CD8-positive, alpha-beta T cell (primary cell): ENCODE measurements at regions of chr12 and their contacts with region 1.

Region 1: DNA sequence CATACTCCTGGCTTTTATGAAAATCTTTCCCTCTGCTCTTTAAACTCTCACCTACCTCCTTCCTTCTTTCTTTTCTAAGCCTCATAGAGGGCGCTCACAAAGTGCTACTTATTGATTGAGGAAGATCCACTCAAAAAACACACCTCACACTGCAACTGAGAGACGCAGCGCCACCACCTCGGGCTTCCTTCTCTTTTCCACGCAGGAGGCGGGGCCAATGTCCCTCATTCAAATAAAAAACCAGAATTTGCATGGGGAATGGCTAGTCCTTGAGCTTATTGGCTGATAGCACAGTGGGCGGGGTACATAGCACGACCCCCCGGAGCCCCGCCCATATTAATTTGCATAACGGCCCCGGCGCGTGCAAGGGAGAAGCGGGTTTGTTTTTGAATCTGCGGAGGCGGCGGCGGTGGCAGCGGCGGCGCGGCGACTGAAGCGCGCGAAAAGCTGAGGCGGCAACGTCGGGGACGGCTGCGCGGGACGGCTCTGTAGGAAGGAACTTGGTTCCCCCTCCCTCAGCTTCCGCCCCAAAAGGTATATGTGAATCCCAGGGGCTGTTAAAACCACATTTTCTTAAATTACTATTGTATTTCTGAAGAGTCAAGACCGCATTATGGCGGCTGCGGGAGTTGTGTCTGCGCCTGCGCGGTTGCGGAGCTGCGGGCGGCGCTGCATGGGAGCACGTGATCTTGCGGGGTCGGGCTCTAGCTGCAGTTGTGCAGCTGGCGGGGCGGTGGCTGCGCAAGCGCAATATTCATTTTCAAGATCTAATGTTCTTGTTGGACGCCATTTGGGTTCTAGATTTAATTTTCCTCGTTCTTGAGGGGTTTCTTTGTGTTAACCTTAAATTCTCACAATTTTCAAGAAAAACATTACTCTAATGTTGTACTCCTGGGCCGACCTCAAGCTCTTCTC is at the start of gene ATF7IP:
- DNase-seq: peak; percentile 92 to 99 (median 95)
- ATAC-seq: peak; percentile 89
- H3K4me3 ChIP-seq: peak within 1 kb of the TSS; percentile 63 to 80
- H3K4me3 Mint-ChIP-seq: peak within 1 kb of the TSS; percentile 87
- H3K27ac ChIP-seq: peak within 1 kb of the TSS; percentile 88
- H3K27ac Mint-ChIP-seq: peak within 1 kb of the TSS; percentile 93
- H3K4me1 ChIP-seq: peaks cover 24% of the 10 kb centered on the region
- H3K4me1 Mint-ChIP-seq: peaks cover 46% of the 10 kb centered on the region
- H3K27me3 ChIP-seq: no peaks in the 10 kb centered on the region
- H3K27me3 Mint-ChIP-seq: no peaks in the 10 kb centered on the region
- CTCF ChIP-seq: no peak
- total RNA-seq, gene ATF7IP: 125 to 126 TPM

Region 2: DNA sequence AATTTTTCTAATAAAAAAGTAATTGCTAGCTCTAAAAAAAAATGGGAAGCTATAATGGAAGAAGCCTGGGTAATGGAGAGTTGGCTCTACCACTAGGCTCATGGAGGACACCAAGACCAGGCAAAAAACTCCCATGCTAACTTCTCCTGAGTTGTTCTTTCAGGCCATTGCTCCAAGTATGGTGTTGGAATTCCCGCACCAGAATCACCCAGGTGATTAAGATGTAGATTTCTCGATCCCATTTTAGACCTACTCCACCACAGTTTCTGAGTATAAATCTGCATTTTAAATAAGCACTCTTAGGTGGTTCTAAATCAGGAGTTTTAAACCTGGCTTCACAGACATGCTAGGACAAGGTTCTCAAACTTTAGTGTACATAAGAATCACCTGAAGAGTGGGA is 948.0 kb before region 1 on chr12:
- CTCF ChIA-PET with region 1: no interaction called
- POLR2A ChIA-PET with region 1: no interaction called
- intact Hi-C with region 1: no loop called
- DNase-seq: no peak
- ATAC-seq: no peak
- H3K4me3 ChIP-seq: no peak overlapping the region
- H3K4me3 Mint-ChIP-seq: no peak overlapping the region
- H3K27ac ChIP-seq: no peak overlapping the region
- H3K27ac Mint-ChIP-seq: no peak overlapping the region
- H3K4me1 ChIP-seq: no peaks in the 10 kb centered on the region
- H3K4me1 Mint-ChIP-seq: no peaks in the 10 kb centered on the region
- H3K27me3 ChIP-seq: peaks cover 0 to 2% of the 10 kb centered on the region in 2 experiments
- H3K27me3 Mint-ChIP-seq: peaks cover 5% of the 10 kb centered on the region
- CTCF ChIP-seq: no peak

Region 3: GRCh38 chr12:13887779-13888388 is 477.7 kb before region 1 on chr12:
- CTCF ChIA-PET with region 1: no interaction called
- POLR2A ChIA-PET with region 1: no interaction called
- intact Hi-C with region 1: no loop called
- DNase-seq: no peak
- ATAC-seq: no peak
- H3K4me3 ChIP-seq: no peak overlapping the region
- H3K4me3 Mint-ChIP-seq: no peak overlapping the region
- H3K27ac ChIP-seq: no peak overlapping the region
- H3K27ac Mint-ChIP-seq: no peak overlapping the region
- H3K4me1 ChIP-seq: no peaks in the 10 kb centered on the region
- H3K4me1 Mint-ChIP-seq: no peaks in the 10 kb centered on the region
- H3K27me3 ChIP-seq: peaks cover 0 to 3% of the 10 kb centered on the region in 2 experiments
- H3K27me3 Mint-ChIP-seq: peaks cover 10% of the 10 kb centered on the region
- CTCF ChIP-seq: no peak

Region 4: DNA sequence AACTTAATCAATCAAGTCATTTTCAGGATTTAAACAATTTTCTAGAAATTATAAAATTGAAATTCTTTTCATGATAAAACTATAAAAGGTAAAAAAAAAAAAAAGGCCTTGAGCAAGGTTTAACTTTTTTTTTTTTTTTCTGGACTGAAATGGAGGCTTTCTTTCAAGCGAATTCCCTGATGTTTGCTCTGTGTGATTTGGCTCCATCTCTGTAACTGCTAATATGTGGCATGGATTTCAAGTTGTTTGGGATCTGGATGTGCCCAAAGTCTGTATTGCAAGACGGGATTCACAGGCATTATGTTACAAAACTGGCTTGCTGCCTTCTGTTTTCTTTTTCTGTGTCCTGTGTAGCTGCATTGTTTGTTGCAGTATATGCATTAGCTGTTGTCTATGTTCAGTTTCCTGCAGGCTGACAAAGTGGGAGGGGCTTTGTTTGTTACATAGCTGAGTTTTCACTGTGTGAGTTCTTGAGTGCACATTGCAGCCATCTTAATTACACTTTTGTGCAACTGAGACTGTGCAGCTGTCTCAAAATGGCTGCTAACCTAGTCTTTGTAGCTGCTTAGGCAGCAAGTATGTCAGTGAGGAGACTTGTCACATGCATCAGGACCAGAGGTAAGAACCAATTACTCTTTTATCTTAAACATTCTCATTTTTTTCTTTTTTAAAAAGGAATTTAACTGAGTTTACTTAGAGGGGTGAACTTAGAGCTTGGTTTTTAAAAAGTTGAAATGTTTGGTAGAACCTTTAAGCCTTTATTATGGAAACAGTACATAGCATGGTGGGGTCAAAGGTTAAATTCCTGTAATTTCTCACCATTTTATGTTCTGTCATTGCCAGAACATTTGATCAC is 19.5 kb after region 1 on chr12:
- CTCF ChIA-PET with region 1: interaction called, 27 read pairs
- POLR2A ChIA-PET with region 1: interaction called, 90 read pairs
- intact Hi-C with region 1: loop called (anchors 1 to 2 kb)
- DNase-seq: peak; percentile 23 to 92 (median 57)
- ATAC-seq: peak; percentile 90
- H3K4me3 ChIP-seq: peak overlapping the region; percentile 1 to 48
- H3K4me3 Mint-ChIP-seq: peak overlapping the region; percentile 60
- H3K27ac ChIP-seq: peak overlapping the region; percentile 56 to 59
- H3K27ac Mint-ChIP-seq: peak overlapping the region; percentile 80
- H3K4me1 ChIP-seq: peaks cover 54% of the 10 kb centered on the region
- H3K4me1 Mint-ChIP-seq: peaks cover 69% of the 10 kb centered on the region
- H3K27me3 ChIP-seq: no peaks in the 10 kb centered on the region
- H3K27me3 Mint-ChIP-seq: no peaks in the 10 kb centered on the region
- CTCF ChIP-seq: no peak

Region 5: DNA sequence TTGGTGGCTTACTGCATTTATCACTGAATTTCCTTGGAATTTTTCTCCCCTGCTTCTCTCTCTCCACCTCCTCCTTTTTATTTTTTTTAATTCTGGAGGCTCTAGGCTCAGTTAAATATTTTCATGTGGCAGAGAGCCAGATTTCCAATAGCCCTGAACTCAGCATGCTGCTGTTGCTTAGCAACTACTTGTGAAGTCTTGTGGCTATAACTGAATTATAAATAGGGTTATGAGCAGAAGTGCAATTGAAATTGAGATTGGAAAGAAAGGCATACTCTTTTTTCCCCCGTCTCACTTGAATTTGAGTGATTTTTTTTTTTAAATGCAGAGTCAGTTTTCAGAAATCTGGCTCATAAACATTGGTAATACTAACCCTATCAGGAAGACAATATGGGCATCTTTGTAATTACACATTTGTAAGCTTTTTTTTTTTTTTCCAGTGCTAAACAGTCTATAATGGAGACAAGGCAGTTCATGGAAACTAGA is 38.2 kb after region 1 on chr12:
- CTCF ChIA-PET with region 1: interaction called, 9 read pairs
- POLR2A ChIA-PET with region 1: interaction called, 11 read pairs
- intact Hi-C with region 1: no loop called
- DNase-seq: peak in 5 of 9 experiments; percentile 19 to 87 (median 29)
- ATAC-seq: peak; percentile 50
- H3K4me3 ChIP-seq: peak overlapping the region in 1 of 2 experiments; percentile 0
- H3K4me3 Mint-ChIP-seq: peak overlapping the region; percentile 57
- H3K27ac ChIP-seq: peak overlapping the region; percentile 5 to 75
- H3K27ac Mint-ChIP-seq: peak overlapping the region; percentile 81
- H3K4me1 ChIP-seq: peaks cover 75% of the 10 kb centered on the region
- H3K4me1 Mint-ChIP-seq: peaks cover 71% of the 10 kb centered on the region
- H3K27me3 ChIP-seq: no peaks in the 10 kb centered on the region
- H3K27me3 Mint-ChIP-seq: no peaks in the 10 kb centered on the region
- CTCF ChIP-seq: no peak

Region 6: GRCh38 chr12:14417715-14418114 is 52.2 kb after region 1 on chr12:
- CTCF ChIA-PET with region 1: interaction called, 33 read pairs
- POLR2A ChIA-PET with region 1: interaction called, 39 read pairs
- intact Hi-C with region 1: loop called (anchors 1 to 2 kb)
- DNase-seq: peak; percentile 45 to 91 (median 66)
- ATAC-seq: peak; percentile 69
- H3K4me3 ChIP-seq: peak overlapping the region in 1 of 2 experiments; percentile 25
- H3K4me3 Mint-ChIP-seq: peak overlapping the region; percentile 76
- H3K27ac ChIP-seq: peak overlapping the region; percentile 46 to 62
- H3K27ac Mint-ChIP-seq: peak overlapping the region; percentile 89
- H3K4me1 ChIP-seq: peaks cover 55% of the 10 kb centered on the region
- H3K4me1 Mint-ChIP-seq: peaks cover 64% of the 10 kb centered on the region
- H3K27me3 ChIP-seq: no peaks in the 10 kb centered on the region
- H3K27me3 Mint-ChIP-seq: no peaks in the 10 kb centered on the region
- CTCF ChIP-seq: no peak

Region 7: DNA sequence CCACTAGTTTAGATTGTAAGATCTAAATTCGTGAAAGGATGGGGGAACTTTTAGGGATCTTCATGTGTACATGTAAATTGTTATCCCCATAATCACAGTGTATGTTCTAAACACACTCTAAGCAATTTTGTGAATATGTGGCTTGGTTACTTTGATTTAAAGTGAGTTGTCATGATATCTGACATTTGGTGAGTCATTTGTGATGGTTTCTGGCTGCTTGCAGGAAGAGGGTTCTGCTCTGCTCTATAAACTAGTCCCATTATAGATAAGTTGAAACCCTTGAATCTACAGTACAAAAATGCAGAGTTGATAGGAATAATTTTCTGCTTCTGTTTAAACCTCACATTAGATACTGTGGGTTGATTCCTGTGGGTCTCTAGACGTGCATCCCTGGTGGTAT is 316.1 kb after region 1 on chr12:
- CTCF ChIA-PET with region 1: no interaction called
- POLR2A ChIA-PET with region 1: no interaction called
- intact Hi-C with region 1: no loop called
- DNase-seq: no peak
- ATAC-seq: no peak
- H3K4me3 ChIP-seq: no peak overlapping the region
- H3K4me3 Mint-ChIP-seq: no peak overlapping the region
- H3K27ac ChIP-seq: no peak overlapping the region
- H3K27ac Mint-ChIP-seq: no peak overlapping the region
- H3K4me1 ChIP-seq: no peaks in the 10 kb centered on the region
- H3K4me1 Mint-ChIP-seq: no peaks in the 10 kb centered on the region
- H3K27me3 ChIP-seq: no peaks in the 10 kb centered on the region
- H3K27me3 Mint-ChIP-seq: no peaks in the 10 kb centered on the region
- CTCF ChIP-seq: no peak

Region 8: GRCh38 chr12:14948672-14949071 is 583.1 kb after region 1 on chr12:
- CTCF ChIA-PET with region 1: no interaction called
- POLR2A ChIA-PET with region 1: no interaction called
- intact Hi-C with region 1: loop called in 1 of 2 experiments (anchors 2 kb)
- DNase-seq: peak in 7 of 9 experiments; percentile 38 to 91 (median 65)
- ATAC-seq: peak; percentile 86
- H3K4me3 ChIP-seq: peak overlapping the region; percentile 27 to 48
- H3K4me3 Mint-ChIP-seq: peak overlapping the region; percentile 78
- H3K27ac ChIP-seq: peak overlapping the region; percentile 36 to 96
- H3K27ac Mint-ChIP-seq: peak overlapping the region; percentile 94
- H3K4me1 ChIP-seq: peaks cover 91% of the 10 kb centered on the region
- H3K4me1 Mint-ChIP-seq: peaks cover 93% of the 10 kb centered on the region
- H3K27me3 ChIP-seq: no peaks in the 10 kb centered on the region
- H3K27me3 Mint-ChIP-seq: no peaks in the 10 kb centered on the region
- CTCF ChIP-seq: no peak